Upper lobe of right lung (tissue), 1 donor: ENCODE measurements at regions of chr19 and their contacts with region 1.

Region 1: GRCh38 chr19:44800461-44800860 is 8.4 kb upstream of the BCAM start:
- DNase-seq: peak; percentile 94
- ATAC-seq: peak; percentile 98
- H3K4me3 ChIP-seq: no peak overlapping the region
- H3K27ac ChIP-seq: no peak overlapping the region
- H3K4me1 ChIP-seq: peaks cover 7% of the 10 kb centered on the region
- H3K27me3 ChIP-seq: no peaks in the 10 kb centered on the region
- CTCF ChIP-seq: peak; percentile 92

Region 2: GRCh38 chr19:44723952-44724319 is 76.5 kb before region 1 on chr19:
- intact Hi-C with region 1: no loop called
- DNase-seq: peak; percentile 89
- ATAC-seq: peak; percentile 93
- H3K4me3 ChIP-seq: no peak overlapping the region
- H3K27ac ChIP-seq: no peak overlapping the region
- H3K4me1 ChIP-seq: peaks cover 52% of the 10 kb centered on the region
- H3K27me3 ChIP-seq: no peaks in the 10 kb centered on the region
- CTCF ChIP-seq: peak; percentile 98

Region 3: GRCh38 chr19:44841231-44841630 is 40.8 kb after region 1 on chr19:
- intact Hi-C with region 1: loop called (anchors 5 kb)
- DNase-seq: peak; percentile 83
- ATAC-seq: no peak
- H3K4me3 ChIP-seq: no peak overlapping the region
- H3K27ac ChIP-seq: no peak overlapping the region
- H3K4me1 ChIP-seq: peaks cover 8% of the 10 kb centered on the region
- H3K27me3 ChIP-seq: no peaks in the 10 kb centered on the region
- CTCF ChIP-seq: no peak